Activated naive CD4-positive, alpha-beta T cell treated with anti-CD3 and anti-CD28 coated beads for 36 hours (primary cell): ENCODE measurements at regions of chr16 and their contacts with region 1.

Region 1: DNA sequence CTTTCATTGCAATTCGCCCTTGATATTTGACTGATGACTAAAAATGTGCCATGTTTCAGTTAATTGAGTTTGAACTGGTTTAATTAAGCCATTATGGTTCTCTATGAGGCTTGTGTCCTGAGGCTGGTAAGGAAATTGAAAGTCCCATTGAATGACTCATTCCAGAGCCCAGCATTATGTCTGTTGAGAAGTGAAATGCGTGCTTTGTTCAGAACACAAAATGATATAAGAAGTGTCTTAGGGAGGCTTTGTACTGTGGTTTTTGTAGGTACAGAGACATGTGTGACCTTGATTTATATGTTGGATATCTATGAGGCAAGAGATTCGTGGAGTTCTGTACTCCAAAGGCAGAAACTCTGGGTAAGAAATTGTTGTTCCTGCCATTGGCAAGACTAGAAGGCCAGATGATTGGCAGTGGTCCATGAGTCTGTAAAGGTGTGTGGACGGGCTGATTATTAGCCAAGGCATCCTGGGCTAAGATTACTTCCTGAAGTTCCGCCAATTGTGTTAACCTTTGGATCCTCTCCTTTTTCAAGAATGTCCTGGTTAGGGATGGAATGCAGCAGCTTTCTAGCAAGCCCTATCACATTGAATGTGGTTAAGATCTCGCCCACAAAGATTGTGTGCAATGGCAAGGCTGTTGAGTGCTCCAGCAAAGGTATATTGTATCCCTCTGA is 103.7 kb downstream of the NPIPB5 start:
- DNase-seq: no peak
- H3K4me3 Mint-ChIP-seq: no peak overlapping the region
- H3K27ac Mint-ChIP-seq: no peak overlapping the region
- H3K4me1 Mint-ChIP-seq: no peaks in the 10 kb centered on the region
- H3K27me3 Mint-ChIP-seq: peaks cover 2% of the 10 kb centered on the region

Region 2: DNA sequence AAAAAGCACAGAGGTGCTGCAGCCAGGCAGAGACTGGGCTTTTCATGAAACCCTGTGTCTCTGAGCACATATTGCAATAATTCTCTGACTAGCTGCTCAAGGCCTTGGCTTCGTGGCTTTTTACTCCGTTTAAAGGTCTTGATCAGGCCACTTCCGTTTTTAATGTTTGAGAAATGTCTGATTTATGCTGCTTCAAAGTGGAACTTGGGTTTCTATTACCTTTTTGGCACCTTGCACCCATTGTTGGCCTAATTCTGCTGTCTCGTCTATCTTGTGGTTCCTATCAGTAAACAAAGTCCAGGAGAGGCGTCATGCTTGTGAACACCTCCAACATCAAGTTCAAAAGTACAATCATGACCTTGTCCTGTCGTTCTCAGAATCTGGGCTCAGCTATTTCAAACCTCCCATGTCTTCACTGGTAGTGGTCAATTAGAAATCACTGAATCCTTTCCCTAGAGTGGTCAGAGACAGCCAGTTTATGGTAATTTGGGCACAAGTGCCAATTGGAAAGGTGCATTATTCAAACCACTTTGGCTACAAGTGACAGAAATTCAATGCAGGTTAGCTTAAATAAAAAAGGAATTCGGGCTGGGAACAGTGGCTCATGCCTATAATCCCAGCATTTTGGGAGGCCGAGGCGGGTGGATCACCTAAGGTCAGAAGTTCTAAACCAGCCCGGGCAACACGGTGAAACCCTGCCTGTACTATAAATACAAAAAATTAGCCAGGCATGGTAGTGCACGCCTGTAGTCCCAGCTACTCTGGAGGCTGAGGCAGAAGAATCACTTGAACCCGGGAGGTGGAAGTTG is 1048.3 kb before region 1 on chr16:
- CTCF ChIA-PET with region 1: no interaction called
- intact Hi-C with region 1: loop called (anchors 10 kb)
- DNase-seq: no peak
- H3K4me3 Mint-ChIP-seq: no peak overlapping the region
- H3K27ac Mint-ChIP-seq: no peak overlapping the region
- H3K4me1 Mint-ChIP-seq: no peaks in the 10 kb centered on the region
- H3K27me3 Mint-ChIP-seq: no peaks in the 10 kb centered on the region

Region 3: DNA sequence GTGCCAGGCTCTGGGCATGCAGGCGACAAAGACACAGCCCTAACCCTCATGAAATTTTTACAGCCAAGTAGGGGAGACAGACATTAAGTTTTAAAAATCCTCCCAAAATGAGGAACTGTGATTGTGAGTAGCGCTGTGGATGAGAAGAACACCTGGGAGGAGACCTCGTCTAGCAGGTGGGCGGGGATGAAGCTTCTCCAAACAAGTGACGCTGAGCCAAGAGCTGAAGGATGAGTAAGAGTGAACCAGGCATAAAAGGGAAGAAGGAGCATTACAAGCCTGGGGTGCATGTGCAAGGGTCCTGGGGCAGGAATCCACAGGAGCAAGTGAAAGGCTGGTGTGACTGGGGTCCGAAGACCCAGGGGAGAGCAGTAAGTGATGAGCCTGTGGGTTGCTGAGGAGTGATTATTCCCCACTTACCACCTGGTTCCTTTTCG is 50.2 kb after region 1 on chr16:
- CTCF ChIA-PET with region 1: no interaction called
- intact Hi-C with region 1: no loop called
- DNase-seq: no peak
- H3K4me3 Mint-ChIP-seq: no peak overlapping the region
- H3K27ac Mint-ChIP-seq: no peak overlapping the region
- H3K4me1 Mint-ChIP-seq: no peaks in the 10 kb centered on the region
- H3K27me3 Mint-ChIP-seq: no peaks in the 10 kb centered on the region